Activated CD4-positive, alpha-beta memory T cell treated with anti-CD3 and anti-CD28 coated beads, Interleukin-2, amount 10 ng/mL, durations not matched to agents 7 days and 5 days (primary cell): ENCODE measurements at regions of chr19 and their contacts with region 1.

Region 1: GRCh38 chr19:5622463-5623396 is at the starts of genes SAFB and SAFB2:
- DNase-seq: peak; percentile 100
- H3K4me3 Mint-ChIP-seq: peak within 1 kb of the TSS; percentile 99
- H3K27ac Mint-ChIP-seq: peak within 1 kb of the TSS; percentile 96
- H3K4me1 Mint-ChIP-seq: peaks cover 65% of the 10 kb centered on the region
- H3K27me3 Mint-ChIP-seq: no peaks in the 10 kb centered on the region
- total RNA-seq, gene SAFB: 124 to 126 TPM
- total RNA-seq, gene SAFB2: 90.5 to 90.7 TPM

Region 2: GRCh38 chr19:5561559-5561958 is 61.2 kb before region 1 on chr19:
- CTCF ChIA-PET with region 1: no interaction called
- POLR2A ChIA-PET with region 1: no interaction called
- DNase-seq: no peak
- H3K4me3 Mint-ChIP-seq: no peak overlapping the region
- H3K27ac Mint-ChIP-seq: no peak overlapping the region
- H3K4me1 Mint-ChIP-seq: no peaks in the 10 kb centered on the region
- H3K27me3 Mint-ChIP-seq: no peaks in the 10 kb centered on the region

Region 3: GRCh38 chr19:5690125-5690954 is 67.6 kb after region 1 on chr19 and contains the start of gene RPL36:
- CTCF ChIA-PET with region 1: interaction called, 21 read pairs
- POLR2A ChIA-PET with region 1: interaction called, 19 read pairs
- DNase-seq: peak; percentile 99
- H3K4me3 Mint-ChIP-seq: peak within 1 kb of the TSS; percentile 90
- H3K27ac Mint-ChIP-seq: peak within 1 kb of the TSS; percentile 91
- H3K4me1 Mint-ChIP-seq: peaks cover 41% of the 10 kb centered on the region
- H3K27me3 Mint-ChIP-seq: no peaks in the 10 kb centered on the region
- total RNA-seq, gene RPL36: 1,036 to 1,058 TPM